GM13977 (cell line): ENCODE measurements at regions of chr1 and their contacts with region 1.

Region 1: GRCh38 chr1:205791568-205792180 is 16.4 kb upstream of the RAB29 start:
- DNase-seq: peak; percentile 79
- CTCF ChIP-seq: peak; percentile 86

Region 2: DNA sequence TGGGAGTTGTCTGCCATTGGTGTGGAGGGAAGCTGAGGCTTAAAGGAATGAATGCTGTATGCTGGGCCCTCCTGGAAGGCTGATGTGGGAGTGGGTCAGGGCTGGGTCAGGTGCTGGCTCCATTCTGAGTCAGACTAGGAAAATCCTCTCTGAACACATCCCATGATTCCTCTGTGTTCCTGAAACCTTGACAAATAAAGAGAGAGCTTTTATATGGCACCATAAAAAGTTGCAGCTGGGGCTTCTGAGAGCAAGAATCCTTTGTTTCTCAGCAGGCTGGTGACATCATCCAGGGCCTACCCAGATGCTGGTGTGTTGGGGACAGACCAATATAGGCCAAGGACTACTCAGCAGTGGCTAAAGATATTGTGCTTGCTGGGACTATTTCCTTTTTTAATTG is 948.8 kb before region 1 on chr1:
- in situ Hi-C with region 1: no loop called
- DNase-seq: no peak
- CTCF ChIP-seq: no peak

Region 3: GRCh38 chr1:205939690-205940330 is 148.1 kb after region 1 on chr1:
- in situ Hi-C with region 1: no loop called
- DNase-seq: peak; percentile 34
- CTCF ChIP-seq: no peak

Region 4: GRCh38 chr1:205983925-205984725 is 192.5 kb after region 1 on chr1:
- in situ Hi-C with region 1: loop called (anchors 10 kb)
- DNase-seq: peak; percentile 72
- CTCF ChIP-seq: peak; percentile 66